ENCODE measurements at regions of chr3 and their contacts with region 1.

Region 1: DNA sequence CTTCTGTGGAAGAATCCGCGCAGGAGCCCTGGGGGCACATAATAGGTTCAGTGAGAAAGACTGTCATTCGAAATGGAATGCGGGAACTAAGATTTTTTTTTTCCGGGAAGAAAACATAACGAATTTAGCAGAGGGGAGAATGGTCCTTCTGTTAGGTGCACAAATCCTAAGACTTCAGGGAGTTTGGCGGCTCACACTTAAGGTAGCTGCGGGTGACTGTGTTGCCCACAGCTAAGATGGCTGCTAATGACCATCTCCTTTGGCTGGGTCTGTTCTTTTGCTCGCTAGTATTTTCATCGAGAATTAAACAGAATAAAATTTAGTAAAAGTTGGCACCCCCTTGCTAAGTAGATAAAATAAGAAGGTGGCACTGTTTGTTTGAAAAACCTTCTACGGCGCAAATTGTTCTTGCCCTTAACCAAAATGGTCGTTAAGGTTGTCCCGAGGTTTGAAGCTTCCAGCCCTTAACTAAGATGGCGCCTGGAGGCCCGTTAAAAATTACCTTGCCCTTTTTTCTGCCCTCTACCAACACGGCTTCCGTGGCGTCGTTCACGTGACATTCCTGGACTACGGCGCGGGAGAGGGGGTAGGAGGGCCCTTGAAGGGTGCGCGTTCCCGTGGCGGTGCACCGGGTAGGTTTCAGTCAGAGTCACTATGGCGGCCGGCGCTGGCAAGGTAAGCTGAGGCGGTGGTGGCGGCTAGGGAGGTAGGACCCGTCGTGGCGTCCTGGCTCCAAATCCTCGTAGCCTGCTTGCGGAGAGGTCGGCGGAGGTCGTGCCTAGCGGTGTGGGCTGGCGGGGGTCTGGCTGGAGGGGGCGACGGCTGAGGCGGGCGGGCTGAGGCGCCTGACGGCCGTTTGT is at the start of gene SLMAP:
- DNase-seq: peak; percentile 98
- ATAC-seq: peak; percentile 99
- total RNA-seq, gene SLMAP: 213 to 259 TPM

Region 2: GRCh38 chr3:57692259-57693147 is 63.4 kb before region 1 on chr3 and contains the start of gene DENND6A:
- intact Hi-C with region 1: loop called in 1 of 2 experiments (anchors 1 kb)
- DNase-seq: peak; percentile 98
- ATAC-seq: peak; percentile 97 to 98
- total RNA-seq, gene DENND6A: 14.2 to 17.7 TPM

Region 3: DNA sequence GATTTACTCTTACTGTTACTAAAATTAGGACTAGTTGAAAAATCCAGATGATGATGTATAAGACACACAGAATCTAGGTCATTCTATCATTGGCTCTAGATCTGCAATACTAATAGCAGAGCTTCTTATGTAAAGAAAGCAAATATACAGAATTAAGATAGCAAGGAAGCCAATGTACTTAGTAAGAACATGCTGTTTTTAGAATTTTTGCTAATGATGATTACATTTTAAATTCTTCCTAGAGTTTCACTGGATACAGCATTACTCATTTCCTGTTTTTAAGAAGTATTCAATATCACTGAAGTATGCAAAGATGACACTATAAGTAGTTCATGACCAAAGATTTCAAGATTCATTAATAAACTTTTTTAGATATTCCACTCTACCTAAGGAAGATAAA is 1233.3 kb after region 1 on chr3:
- intact Hi-C with region 1: no loop called
- DNase-seq: no peak
- ATAC-seq: no peak